ENCODE measurements at regions of chr1 and their contacts with region 1.

Region 1: DNA sequence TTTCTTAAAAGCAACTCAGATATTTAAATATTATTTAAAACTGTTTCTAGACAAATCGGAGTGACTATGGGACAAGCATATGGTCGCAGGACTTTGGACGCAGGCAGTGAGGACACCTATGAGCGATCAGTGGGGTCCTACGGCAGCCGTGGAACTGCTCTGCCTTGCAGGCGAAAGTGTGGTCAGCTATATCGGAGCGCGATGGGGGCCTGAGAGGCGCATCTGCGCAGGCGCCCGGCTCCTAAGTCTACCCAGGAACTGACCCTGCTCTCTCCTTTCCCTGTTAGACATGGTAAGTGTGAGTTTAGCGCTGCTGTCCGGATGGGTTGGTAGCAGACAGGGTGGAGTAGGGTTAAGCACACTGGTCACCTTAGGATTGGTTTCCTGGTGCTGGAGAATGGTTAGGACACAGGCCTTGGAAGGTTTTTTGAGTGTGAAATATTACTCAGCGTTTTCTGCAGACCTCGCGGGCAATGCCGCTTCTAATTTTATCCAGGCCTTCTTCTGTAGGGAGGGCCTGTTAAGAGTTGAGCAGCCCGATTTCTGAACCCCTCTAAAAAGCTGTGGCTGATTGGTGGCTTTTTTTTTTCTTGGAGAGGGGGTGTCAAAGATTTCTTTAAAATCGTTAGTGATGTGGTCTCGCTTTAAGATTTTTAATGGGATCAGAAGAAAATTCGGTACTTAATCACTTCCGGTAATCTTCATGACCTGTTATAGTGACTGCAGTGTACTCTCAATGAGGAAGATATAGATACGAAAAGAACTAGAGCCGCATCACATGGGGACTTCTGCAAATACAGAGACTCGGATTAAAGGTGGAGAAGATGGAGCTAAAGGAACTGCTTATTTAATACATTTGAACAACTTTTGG is at the start of gene RABGGTB:
- DNase-seq: peak; percentile 94 to 96
- ATAC-seq: peak; percentile 98 to 100 (median 99)
- H3K4me3 ChIP-seq: peak within 1 kb of the TSS; percentile 58 to 90 (median 72)
- H3K27ac ChIP-seq: peak within 1 kb of the TSS; percentile 51 to 96 (median 86)
- H3K4me1 ChIP-seq: peaks cover 10 to 52% (median 43%) of the 10 kb centered on the region in 9 donors
- H3K27me3 ChIP-seq: no peaks in the 10 kb centered on the region
- CTCF ChIP-seq: no peak
- total RNA-seq, gene RABGGTB: 48.3 to 75.7 (median 65.8) TPM

Region 2: GRCh38 chr1:75707191-75707590 is 79.0 kb before region 1 on chr1:
- intact Hi-C with region 1: no loop called
- DNase-seq: no peak
- ATAC-seq: no peak
- H3K4me3 ChIP-seq: no peak overlapping the region
- H3K27ac ChIP-seq: no peak overlapping the region
- H3K4me1 ChIP-seq: peaks cover 0 to 8% (median 0%) of the 10 kb centered on the region in 9 donors
- H3K27me3 ChIP-seq: peaks cover 0 to 8% (median 0%) of the 10 kb centered on the region in 7 donors
- CTCF ChIP-seq: no peak

Region 3: GRCh38 chr1:75724472-75725022 is 61.7 kb before region 1 on chr1 and contains the start of gene ACADM:
- intact Hi-C with region 1: loop called in 7 of 10 experiments (anchors 2 to 10 kb)
- DNase-seq: peak; percentile 90 to 92
- ATAC-seq: peak; percentile 98 to 100 (median 99)
- H3K4me3 ChIP-seq: peak within 1 kb of the TSS; percentile 66 to 93 (median 72)
- H3K27ac ChIP-seq: peak within 1 kb of the TSS; percentile 80 to 96 (median 92)
- H3K4me1 ChIP-seq: peaks cover 0 to 35% (median 28%) of the 10 kb centered on the region in 9 donors
- H3K27me3 ChIP-seq: no peaks in the 10 kb centered on the region
- CTCF ChIP-seq: no peak
- total RNA-seq, gene ACADM: 174 to 425 (median 360) TPM

Region 4: GRCh38 chr1:75731881-75732280 is 54.3 kb before region 1 on chr1:
- intact Hi-C with region 1: loop called in 5 of 10 experiments (anchors 5 to 10 kb)
- DNase-seq: no peak
- ATAC-seq: no peak
- H3K4me3 ChIP-seq: no peak overlapping the region
- H3K27ac ChIP-seq: no peak overlapping the region
- H3K4me1 ChIP-seq: peaks cover 0 to 12% (median 9%) of the 10 kb centered on the region in 9 donors
- H3K27me3 ChIP-seq: no peaks in the 10 kb centered on the region
- CTCF ChIP-seq: no peak